CD8-positive, alpha-beta memory T cell (primary cell): ENCODE measurements at regions of chr1 and their contacts with region 1.

Region 1: DNA sequence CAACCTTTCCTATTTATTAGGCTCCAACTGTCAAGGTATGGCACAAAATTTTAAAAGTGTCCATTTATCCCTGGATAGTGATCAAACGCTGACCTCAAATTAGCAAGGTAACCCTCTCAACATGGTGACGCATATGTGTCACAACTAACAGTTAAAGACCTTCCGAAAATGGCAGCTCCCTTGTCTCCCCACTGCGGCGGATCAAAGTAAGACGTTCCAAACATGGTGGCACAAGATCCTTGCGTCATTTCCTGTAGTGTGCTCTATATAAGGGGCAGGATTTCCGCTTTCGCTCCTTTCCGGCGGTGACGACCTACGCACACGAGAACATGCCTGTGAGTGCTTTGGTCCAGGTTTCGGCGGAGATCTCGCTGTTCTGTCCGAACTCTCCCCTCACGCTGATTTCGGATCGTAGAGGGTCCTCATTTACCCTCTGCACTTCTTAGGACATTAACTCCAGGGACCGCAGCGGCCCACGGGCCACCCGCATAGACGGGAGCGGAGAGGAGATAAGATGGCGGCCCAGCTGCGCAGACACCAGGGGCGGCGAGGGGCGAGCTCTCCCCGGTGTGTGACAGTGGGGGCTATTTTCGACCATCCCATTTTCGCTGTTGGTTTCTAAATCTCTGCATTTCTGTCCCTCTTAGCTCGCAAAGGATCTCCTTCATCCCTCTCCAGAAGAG is at the start of gene RPS27:
- DNase-seq: peak; percentile 77 to 96 (median 92)
- H3K4me3 ChIP-seq: peak within 1 kb of the TSS; percentile 79
- H3K4me3 Mint-ChIP-seq: peak within 1 kb of the TSS; percentile 91 to 100 (median 97)
- H3K27ac ChIP-seq: peak within 1 kb of the TSS; percentile 96
- H3K27ac Mint-ChIP-seq: peak within 1 kb of the TSS; percentile 93 to 100 (median 100)
- H3K4me1 ChIP-seq: peaks cover 42% of the 10 kb centered on the region
- H3K4me1 Mint-ChIP-seq: peaks cover 36 to 61% (median 53%) of the 10 kb centered on the region in 3 donors
- H3K27me3 ChIP-seq: no peaks in the 10 kb centered on the region
- H3K27me3 Mint-ChIP-seq: peaks cover 8% of the 10 kb centered on the region in 2 donors
- total RNA-seq, gene RPS27: 1,959 to 2,149 TPM

Region 2: DNA sequence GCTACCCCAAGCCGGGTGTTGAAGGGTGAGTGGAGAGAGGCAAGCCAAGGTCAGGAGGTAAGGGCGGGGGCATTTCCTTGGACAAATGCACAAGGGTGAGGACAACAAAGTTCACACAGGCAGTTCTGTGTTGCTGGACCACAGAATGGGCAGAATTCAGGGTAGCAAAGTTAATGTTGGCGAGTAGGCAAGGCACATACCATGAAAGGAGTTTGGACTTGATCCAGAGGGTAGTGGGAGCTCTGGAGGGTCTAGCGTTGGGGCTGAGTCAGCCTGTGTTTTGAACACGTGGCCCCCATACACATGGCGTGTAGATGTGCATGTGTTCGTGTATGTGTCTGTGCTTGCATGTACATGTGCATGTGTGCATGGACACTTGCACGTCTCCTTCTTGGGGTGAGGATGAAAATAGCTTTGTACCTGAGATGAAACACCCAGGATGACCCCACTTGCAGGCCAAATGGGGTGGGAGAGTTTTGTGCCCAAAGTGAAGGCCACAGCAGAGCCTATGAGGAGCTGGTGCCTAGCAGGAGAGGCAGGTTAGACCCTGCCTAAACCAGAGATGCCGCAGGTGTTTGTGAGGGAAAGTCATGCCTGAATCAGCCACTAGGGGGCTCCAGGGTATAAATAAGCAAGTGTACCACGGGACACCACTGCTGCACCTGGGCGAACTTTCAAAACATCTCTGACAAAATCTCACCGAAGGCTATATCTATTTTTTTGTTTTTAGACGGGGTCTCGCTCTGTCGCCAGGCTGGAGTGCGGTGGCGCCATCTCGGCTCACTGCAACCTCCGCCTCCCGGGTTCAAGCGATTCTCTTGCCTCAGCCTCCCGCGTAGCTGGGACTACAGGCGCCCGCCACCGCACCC is 193.6 kb before region 1 on chr1:
- CTCF ChIA-PET with region 1: interaction called, 94 read pairs
- POLR2A ChIA-PET with region 1: interaction called, 3 read pairs
- DNase-seq: peak; percentile 74 to 87 (median 77)
- H3K4me3 ChIP-seq: no peak overlapping the region
- H3K4me3 Mint-ChIP-seq: peak overlapping the region in 3 of 7 donors; percentile 1 to 28 (median 20)
- H3K27ac ChIP-seq: no peak overlapping the region
- H3K27ac Mint-ChIP-seq: peak overlapping the region in 7 of 8 donors; percentile 8 to 87 (median 69)
- H3K4me1 ChIP-seq: peaks cover 12% of the 10 kb centered on the region
- H3K4me1 Mint-ChIP-seq: peaks cover 16 to 29% (median 17%) of the 10 kb centered on the region in 3 donors
- H3K27me3 ChIP-seq: no peaks in the 10 kb centered on the region
- H3K27me3 Mint-ChIP-seq: peaks cover 0 to 2% of the 10 kb centered on the region in 2 donors

Region 3: GRCh38 chr1:153827168-153827964 is 163.2 kb before region 1 on chr1:
- CTCF ChIA-PET with region 1: interaction called, 10 read pairs
- POLR2A ChIA-PET with region 1: no interaction called
- DNase-seq: no peak
- H3K4me3 ChIP-seq: no peak overlapping the region
- H3K4me3 Mint-ChIP-seq: no peak overlapping the region
- H3K27ac ChIP-seq: no peak overlapping the region
- H3K27ac Mint-ChIP-seq: peak overlapping the region in 2 of 8 donors; percentile 15 to 66
- H3K4me1 ChIP-seq: no peaks in the 10 kb centered on the region
- H3K4me1 Mint-ChIP-seq: peaks cover 2 to 10% (median 10%) of the 10 kb centered on the region in 3 donors
- H3K27me3 ChIP-seq: no peaks in the 10 kb centered on the region
- H3K27me3 Mint-ChIP-seq: no peaks in the 10 kb centered on the region

Region 4: DNA sequence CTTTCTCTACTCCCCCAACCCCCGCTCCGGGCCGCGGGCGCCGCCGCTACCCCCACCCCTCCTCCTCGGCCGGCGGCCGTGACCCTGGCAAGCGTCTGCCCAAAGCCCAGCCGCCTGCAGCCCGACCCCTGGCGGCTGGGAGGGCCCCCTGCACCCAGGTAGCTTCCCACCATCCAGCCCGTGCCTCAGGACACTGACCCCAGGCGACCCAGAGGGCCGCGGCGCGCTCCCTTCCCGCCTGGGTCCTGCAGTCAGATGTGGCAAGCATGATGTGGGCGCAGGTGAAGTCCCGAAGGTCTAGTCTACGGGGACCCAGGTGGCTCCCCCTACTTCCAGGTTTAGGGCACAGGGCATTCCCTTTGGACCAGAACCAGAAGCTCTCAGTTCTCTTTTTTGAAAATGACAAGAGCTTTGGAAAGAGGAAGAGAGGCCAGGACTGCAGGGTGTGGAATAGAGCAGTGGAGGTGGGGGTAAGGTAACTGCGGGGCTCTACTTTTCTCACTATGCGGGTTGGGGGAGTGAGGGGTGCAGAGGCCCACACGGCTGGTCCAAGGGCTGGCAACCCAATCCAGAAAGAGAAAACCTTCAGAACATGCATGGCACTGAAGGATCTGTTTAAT is 43.9 kb before region 1 on chr1 and contains the start of gene DENND4B:
- CTCF ChIA-PET with region 1: interaction called, 40 read pairs
- POLR2A ChIA-PET with region 1: interaction called, 24 read pairs
- DNase-seq: peak; percentile 60 to 82 (median 71)
- H3K4me3 ChIP-seq: peak within 1 kb of the TSS; percentile 83
- H3K4me3 Mint-ChIP-seq: peak within 1 kb of the TSS; percentile 94 to 99 (median 98)
- H3K27ac ChIP-seq: peak within 1 kb of the TSS; percentile 91
- H3K27ac Mint-ChIP-seq: peak within 1 kb of the TSS; percentile 93 to 100 (median 98)
- H3K4me1 ChIP-seq: peaks cover 31% of the 10 kb centered on the region
- H3K4me1 Mint-ChIP-seq: peaks cover 30 to 42% (median 37%) of the 10 kb centered on the region in 3 donors
- H3K27me3 ChIP-seq: no peaks in the 10 kb centered on the region
- H3K27me3 Mint-ChIP-seq: peaks cover 0 to 4% of the 10 kb centered on the region in 2 donors
- total RNA-seq, gene DENND4B: 100 to 102 TPM

Region 5: DNA sequence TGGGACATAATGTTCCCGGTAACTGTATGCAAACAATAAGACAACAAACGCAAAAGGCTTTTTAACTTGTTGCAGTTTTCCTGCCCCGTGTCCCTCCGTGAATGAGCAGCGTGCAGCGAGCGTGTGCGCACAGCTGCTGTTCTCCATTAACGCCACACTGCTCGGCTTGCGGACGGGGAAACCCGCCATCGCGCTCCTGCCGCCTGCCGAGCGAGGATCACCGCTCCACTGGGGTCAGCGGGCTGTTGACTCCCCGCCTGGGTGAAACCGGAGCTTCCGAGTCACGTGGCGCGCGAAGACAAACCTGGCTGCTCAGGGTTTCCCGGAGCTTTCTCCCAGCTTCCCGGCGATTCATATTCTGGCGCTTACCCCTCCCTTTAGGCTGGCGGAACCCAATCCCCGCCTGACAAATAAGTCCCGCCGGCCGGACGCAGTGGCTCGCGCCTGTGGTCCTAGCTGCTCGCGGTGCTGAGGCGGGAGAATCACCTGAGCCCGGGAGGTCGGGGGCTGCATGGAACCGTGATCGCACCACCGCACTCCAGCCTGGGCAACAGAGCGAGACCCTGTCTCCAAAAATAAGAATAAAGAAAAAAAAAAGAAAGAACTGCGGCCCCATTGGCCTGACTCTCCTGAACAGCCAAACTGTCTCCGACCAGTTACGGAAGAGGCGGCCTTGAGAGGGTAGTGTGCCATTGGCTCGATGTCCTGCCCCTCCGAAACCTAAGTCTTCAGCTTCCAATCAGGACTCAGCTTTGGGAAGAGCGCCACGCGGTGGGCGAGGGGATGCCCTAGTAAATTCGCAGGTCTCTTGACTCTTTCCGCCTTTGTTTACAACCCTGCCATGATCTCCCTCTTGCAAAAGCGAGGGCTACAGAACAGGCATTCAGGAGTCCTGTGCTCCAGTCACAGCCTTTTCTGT is 23.3 kb before region 1 on chr1 and contains the start of gene CREB3L4:
- CTCF ChIA-PET with region 1: interaction called, 21 read pairs
- POLR2A ChIA-PET with region 1: interaction called, 46 read pairs
- DNase-seq: peak; percentile 70 to 89 (median 85)
- H3K4me3 ChIP-seq: peak within 1 kb of the TSS; percentile 53
- H3K4me3 Mint-ChIP-seq: peak within 1 kb of the TSS; percentile 92 to 97 (median 96)
- H3K27ac ChIP-seq: peak within 1 kb of the TSS; percentile 62
- H3K27ac Mint-ChIP-seq: peak within 1 kb of the TSS; percentile 86 to 99 (median 97)
- H3K4me1 ChIP-seq: peaks cover 39% of the 10 kb centered on the region
- H3K4me1 Mint-ChIP-seq: peaks cover 45 to 63% (median 52%) of the 10 kb centered on the region in 3 donors
- H3K27me3 ChIP-seq: no peaks in the 10 kb centered on the region
- H3K27me3 Mint-ChIP-seq: no peaks in the 10 kb centered on the region
- total RNA-seq, gene CREB3L4: 10.0 to 10.1 TPM

Region 6: DNA sequence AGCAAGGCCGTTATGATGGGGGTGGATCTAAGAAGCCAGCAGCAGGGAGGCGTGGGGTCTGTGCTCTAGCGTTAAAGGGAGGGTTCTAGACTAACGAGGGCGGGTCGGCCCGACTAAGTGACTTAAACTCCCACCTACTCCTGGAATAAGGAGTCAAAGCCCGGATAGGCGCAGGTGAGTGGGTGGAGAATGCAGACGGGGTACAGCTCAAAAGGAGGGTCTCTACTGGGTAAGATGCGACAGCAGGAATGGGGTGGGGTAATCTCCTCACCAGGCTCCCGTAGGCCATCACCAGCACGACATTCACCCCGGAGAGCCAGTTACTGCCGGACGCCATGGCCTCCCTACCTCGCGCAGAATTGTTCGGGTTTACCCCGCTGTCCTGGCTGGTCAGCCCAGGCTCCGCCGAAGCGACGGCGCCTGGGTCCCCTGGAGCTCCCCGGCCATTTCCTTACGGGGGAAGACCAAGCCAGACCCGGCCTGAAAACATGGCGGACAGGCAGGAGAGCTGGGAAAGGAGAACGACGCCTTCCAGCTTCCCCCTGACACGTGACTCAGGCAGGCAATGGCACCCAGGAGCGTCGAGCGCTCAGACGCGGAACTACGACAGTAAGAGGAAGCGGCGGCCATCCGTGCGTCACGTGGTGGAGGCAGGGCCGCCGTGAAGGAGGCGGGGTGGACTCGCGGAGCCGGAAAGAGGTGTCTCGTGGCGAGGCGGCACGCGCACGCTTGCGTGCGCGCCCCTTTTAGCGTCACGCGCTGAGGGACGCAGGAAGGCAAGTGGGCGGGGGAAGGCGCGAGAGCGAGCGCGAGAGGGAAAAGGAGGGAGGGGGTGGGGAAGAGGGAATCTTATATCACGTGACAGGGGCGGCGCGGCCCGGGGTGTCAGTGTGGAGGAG is 229.7 kb after region 1 on chr1 and contains the start of gene UBAP2L:
- CTCF ChIA-PET with region 1: no interaction called
- POLR2A ChIA-PET with region 1: interaction called, 15 read pairs
- DNase-seq: peak; percentile 98 to 99 (median 99)
- H3K4me3 ChIP-seq: peak within 1 kb of the TSS; percentile 91
- H3K4me3 Mint-ChIP-seq: peak within 1 kb of the TSS; percentile 88 to 99 (median 98)
- H3K27ac ChIP-seq: peak within 1 kb of the TSS; percentile 98
- H3K27ac Mint-ChIP-seq: peak within 1 kb of the TSS; percentile 89 to 100 (median 100)
- H3K4me1 ChIP-seq: peaks cover 53% of the 10 kb centered on the region
- H3K4me1 Mint-ChIP-seq: peaks cover 66 to 80% (median 75%) of the 10 kb centered on the region in 3 donors
- H3K27me3 ChIP-seq: no peaks in the 10 kb centered on the region
- H3K27me3 Mint-ChIP-seq: no peaks in the 10 kb centered on the region
- total RNA-seq, gene UBAP2L: 258 to 277 TPM